Body of pancreas (tissue), 4 donors: ENCODE measurements at regions of chr16 and their contacts with region 1.

Region 1: GRCh38 chr16:52191531-52192134 is 355.3 kb downstream of the TOX3 start:
- DNase-seq: peak; percentile 67 to 77 (median 72)
- ATAC-seq: peak; percentile 60
- H3K4me3 ChIP-seq: no peak overlapping the region
- H3K27ac ChIP-seq: no peak overlapping the region
- H3K4me1 ChIP-seq: no peaks in the 10 kb centered on the region
- H3K27me3 ChIP-seq: no peaks in the 10 kb centered on the region
- CTCF ChIP-seq: peak; percentile 82 to 96 (median 93)
- POLR2A ChIP-seq: no peak

Region 2: GRCh38 chr16:52090080-52090479 is 101.6 kb before region 1 on chr16:
- intact Hi-C with region 1: no loop called
- DNase-seq: no peak
- ATAC-seq: no peak
- H3K4me3 ChIP-seq: no peak overlapping the region
- H3K27ac ChIP-seq: no peak overlapping the region
- H3K4me1 ChIP-seq: no peaks in the 10 kb centered on the region
- H3K27me3 ChIP-seq: no peaks in the 10 kb centered on the region
- CTCF ChIP-seq: no peak
- POLR2A ChIP-seq: no peak

Region 3: DNA sequence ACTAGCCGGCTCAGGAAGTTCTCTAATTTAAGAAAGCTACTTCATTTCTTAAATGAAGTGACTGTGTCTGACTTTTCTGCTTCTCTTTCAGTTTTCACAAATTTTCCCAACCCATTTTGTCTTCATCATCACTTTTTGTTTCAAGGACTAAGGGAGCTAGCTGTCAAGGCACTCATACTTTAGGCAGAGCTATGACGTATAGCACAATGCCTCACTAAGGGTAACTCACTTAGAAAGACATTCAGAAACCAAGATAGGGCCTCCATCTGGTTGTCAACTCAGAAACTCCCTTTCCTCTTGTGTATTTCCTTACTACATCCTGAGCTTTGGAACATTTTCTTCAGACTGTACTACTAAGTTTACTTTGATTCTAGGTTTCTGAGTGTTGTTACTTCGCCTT is 42.6 kb before region 1 on chr16:
- intact Hi-C with region 1: no loop called
- DNase-seq: no peak
- ATAC-seq: no peak
- H3K4me3 ChIP-seq: no peak overlapping the region
- H3K27ac ChIP-seq: no peak overlapping the region
- H3K4me1 ChIP-seq: no peaks in the 10 kb centered on the region
- H3K27me3 ChIP-seq: no peaks in the 10 kb centered on the region
- CTCF ChIP-seq: no peak
- POLR2A ChIP-seq: no peak

Region 4: DNA sequence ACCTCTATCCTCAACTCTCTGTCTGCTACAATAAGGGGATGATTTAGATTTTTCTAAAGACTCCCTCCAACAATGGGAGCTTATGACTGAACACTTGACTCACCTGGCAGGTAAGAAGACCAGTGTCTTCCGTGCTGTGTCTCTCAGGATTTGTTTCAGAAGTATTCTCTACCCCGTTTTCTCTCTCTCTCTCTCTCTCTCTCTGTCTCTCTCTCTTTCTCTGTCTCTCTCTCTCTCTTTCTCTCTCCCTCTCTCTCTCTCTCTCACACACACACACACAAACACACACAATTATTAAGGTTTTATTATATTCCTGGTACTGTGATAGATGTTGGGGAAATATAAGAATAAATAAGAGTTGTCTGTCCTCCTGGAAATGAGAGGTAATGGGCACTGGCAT is 91.4 kb after region 1 on chr16:
- intact Hi-C with region 1: no loop called
- DNase-seq: no peak
- ATAC-seq: no peak
- H3K4me3 ChIP-seq: no peak overlapping the region
- H3K27ac ChIP-seq: no peak overlapping the region
- H3K4me1 ChIP-seq: no peaks in the 10 kb centered on the region
- H3K27me3 ChIP-seq: peaks cover 0 to 4% of the 10 kb centered on the region in 2 donors
- CTCF ChIP-seq: no peak
- POLR2A ChIP-seq: no peak

Region 5: DNA sequence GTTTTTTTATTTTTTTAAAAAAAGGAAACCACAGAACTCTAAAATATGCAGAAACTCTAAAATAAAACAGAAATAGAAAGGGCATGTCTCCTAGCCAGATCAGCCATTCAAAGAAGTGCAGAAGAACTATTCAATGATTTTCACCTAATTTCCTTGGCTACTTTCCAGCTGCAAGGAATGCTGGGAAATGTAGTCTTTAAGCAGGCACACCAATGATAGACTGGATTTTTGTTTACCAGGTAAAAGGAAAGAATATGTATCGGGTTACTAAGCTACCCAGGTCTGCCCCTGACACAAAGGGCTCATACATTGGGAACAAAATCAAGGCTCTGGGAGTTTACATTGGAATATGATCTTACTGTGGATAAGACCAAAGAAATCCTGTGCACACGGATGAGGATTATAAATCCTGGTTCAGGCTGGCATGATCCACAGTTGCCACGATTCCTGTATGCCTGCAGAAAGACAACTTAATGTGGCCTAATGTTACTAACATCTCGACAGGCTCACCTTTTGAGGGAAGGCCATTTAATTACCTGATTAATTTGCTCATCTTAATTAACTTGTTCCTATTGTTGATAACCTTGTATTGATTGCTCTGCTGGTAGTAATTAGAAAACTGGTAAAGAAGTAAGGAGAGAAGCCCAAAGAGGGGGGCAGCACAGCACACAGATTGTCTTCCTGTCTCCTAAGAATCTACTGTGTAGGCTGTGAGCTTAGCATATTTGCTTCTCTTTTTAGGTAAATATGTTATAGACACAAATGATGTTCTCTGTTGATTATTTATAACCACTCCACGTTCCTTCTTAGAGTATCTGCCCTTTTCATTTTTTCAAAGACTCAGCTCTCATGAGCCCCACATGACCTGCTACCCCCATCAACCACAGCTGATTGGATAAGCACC is 406.2 kb after region 1 on chr16:
- intact Hi-C with region 1: no loop called
- DNase-seq: peak; percentile 26 to 63 (median 60)
- ATAC-seq: peak; percentile 47
- H3K4me3 ChIP-seq: no peak overlapping the region
- H3K27ac ChIP-seq: peak overlapping the region in 1 of 4 donors; percentile 22
- H3K4me1 ChIP-seq: peaks cover 6% of the 10 kb centered on the region
- H3K27me3 ChIP-seq: no peaks in the 10 kb centered on the region
- CTCF ChIP-seq: no peak
- POLR2A ChIP-seq: no peak

Region 6: GRCh38 chr16:52912565-52913173 is 721.0 kb after region 1 on chr16:
- intact Hi-C with region 1: loop called (anchors 5 kb)
- DNase-seq: peak; percentile 74 to 80 (median 76)
- ATAC-seq: peak; percentile 65
- H3K4me3 ChIP-seq: no peak overlapping the region
- H3K27ac ChIP-seq: no peak overlapping the region
- H3K4me1 ChIP-seq: no peaks in the 10 kb centered on the region
- H3K27me3 ChIP-seq: no peaks in the 10 kb centered on the region
- CTCF ChIP-seq: peak; percentile 64 to 87 (median 76)
- POLR2A ChIP-seq: no peak

Region 7: DNA sequence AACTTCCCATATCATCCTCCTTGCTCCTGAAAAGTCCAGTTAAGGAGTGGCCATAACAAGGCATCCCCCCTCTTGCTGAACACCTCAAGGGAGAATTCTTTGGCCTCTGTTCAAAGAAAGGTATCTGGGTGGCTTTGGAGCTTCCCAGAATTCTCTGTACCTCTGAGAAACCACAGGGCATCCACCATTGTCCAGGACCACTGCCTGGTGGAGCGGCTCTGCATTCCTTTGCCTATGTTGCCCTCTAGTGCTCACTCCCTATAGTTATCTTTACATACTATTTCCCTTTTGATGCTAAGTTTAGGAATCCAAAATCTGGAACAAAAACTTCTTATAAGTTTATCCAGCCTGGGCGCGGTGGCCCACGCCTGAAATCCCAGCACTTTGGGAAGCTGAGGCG is 830.7 kb after region 1 on chr16:
- intact Hi-C with region 1: loop called (anchors 5 kb)
- DNase-seq: peak; percentile 26 to 45 (median 32)
- ATAC-seq: no peak
- H3K4me3 ChIP-seq: no peak overlapping the region
- H3K27ac ChIP-seq: no peak overlapping the region
- H3K4me1 ChIP-seq: no peaks in the 10 kb centered on the region
- H3K27me3 ChIP-seq: no peaks in the 10 kb centered on the region
- CTCF ChIP-seq: peak; percentile 17 to 65 (median 58)
- POLR2A ChIP-seq: no peak